Activated B cell treated with CpG ODN at 0.5 μM for 24 hours (primary cell): ENCODE measurements at regions of chr20 and their contacts with region 1.

Region 1: DNA sequence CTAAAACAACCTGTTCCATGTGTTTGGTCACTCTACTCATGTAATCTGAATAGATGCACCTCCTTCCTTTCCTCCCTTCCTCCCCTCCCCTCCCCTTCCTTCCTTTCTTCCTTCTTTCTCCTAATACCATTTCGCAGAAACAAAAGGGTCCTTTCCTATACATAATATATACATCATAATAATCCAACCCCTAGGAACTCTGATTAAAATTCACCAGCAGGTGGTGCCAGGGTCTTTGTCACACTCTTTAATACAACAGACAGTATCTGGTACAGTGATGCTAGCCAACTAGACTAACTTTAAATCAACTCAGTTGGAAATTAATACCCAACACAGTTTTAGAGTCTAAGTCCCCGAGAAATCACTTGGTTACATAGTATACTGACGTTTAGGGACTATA is 181.2 kb upstream of the SHLD1 start:
- DNase-seq: no peak
- ATAC-seq: peak; percentile 90
- H3K4me3 Mint-ChIP-seq: no peak overlapping the region
- H3K27ac Mint-ChIP-seq: peak overlapping the region; percentile 43
- H3K4me1 Mint-ChIP-seq: peaks cover 23% of the 10 kb centered on the region
- H3K27me3 Mint-ChIP-seq: no peaks in the 10 kb centered on the region
- CTCF ChIP-seq: peak; percentile 67

Region 2: GRCh38 chr20:5557123-5557522 is 11.9 kb before region 1 on chr20:
- CTCF ChIA-PET with region 1: interaction called, 19 read pairs
- POLR2A ChIA-PET with region 1: no interaction called
- intact Hi-C with region 1: no loop called
- DNase-seq: no peak
- ATAC-seq: peak; percentile 66
- H3K4me3 Mint-ChIP-seq: no peak overlapping the region
- H3K27ac Mint-ChIP-seq: no peak overlapping the region
- H3K4me1 Mint-ChIP-seq: peaks cover 2% of the 10 kb centered on the region
- H3K27me3 Mint-ChIP-seq: no peaks in the 10 kb centered on the region
- CTCF ChIP-seq: no peak

Region 3: DNA sequence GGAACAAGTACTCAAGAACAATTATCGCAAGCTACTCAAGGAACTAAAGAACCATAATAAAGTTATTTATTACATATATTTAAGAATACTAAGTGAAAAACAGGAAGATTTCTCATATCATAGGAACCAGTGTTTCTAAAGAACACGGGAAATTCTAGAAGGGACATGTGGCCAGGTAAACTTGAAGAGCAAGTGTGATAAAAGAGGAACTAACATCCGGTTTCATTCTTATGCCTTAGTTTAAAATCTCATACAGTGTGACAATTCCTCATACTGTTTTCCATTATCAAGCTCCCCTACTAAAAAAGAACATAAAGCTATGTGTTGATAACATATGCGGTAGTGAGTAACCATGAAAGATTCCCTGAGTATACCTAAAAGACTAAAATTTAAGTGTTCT is 17.7 kb after region 1 on chr20:
- CTCF ChIA-PET with region 1: interaction called, 5 read pairs
- POLR2A ChIA-PET with region 1: interaction called, 5 read pairs
- intact Hi-C with region 1: loop called (anchors 2 kb)
- DNase-seq: no peak
- ATAC-seq: peak; percentile 69
- H3K4me3 Mint-ChIP-seq: peak overlapping the region; percentile 20
- H3K27ac Mint-ChIP-seq: peak overlapping the region; percentile 67
- H3K4me1 Mint-ChIP-seq: peaks cover 48% of the 10 kb centered on the region
- H3K27me3 Mint-ChIP-seq: no peaks in the 10 kb centered on the region
- CTCF ChIP-seq: no peak

Region 4: GRCh38 chr20:5657190-5657875 is 88.3 kb after region 1 on chr20:
- CTCF ChIA-PET with region 1: no interaction called
- POLR2A ChIA-PET with region 1: no interaction called
- intact Hi-C with region 1: no loop called
- DNase-seq: no peak
- ATAC-seq: no peak
- H3K4me3 Mint-ChIP-seq: no peak overlapping the region
- H3K27ac Mint-ChIP-seq: peak overlapping the region; percentile 68
- H3K4me1 Mint-ChIP-seq: peaks cover 66% of the 10 kb centered on the region
- H3K27me3 Mint-ChIP-seq: no peaks in the 10 kb centered on the region
- CTCF ChIP-seq: no peak

Region 5: DNA sequence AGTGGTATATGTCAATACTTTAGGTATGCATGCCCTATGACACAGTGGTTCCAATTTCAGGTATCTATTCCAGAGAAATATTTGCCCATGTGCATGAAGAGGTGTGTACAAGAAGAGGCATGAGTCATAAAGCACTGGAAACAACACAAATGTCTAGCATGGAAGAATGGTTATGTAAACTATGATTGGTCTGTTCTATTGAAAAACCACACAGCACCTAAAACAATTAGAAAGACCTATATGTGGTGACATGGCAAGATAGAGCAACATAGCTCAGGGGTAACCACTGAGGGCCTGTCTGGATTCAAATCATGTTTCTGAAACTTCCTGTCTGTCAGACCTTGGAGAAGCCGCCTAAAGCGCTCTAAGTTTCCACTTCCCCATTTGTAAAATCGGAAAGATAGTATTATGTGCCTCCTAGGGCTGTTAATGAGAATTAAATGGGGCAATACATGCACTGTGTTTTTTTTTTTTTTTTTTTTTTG is 105.2 kb after region 1 on chr20:
- CTCF ChIA-PET with region 1: interaction called, 3 read pairs
- POLR2A ChIA-PET with region 1: no interaction called
- intact Hi-C with region 1: loop called (anchors 1 kb)
- DNase-seq: no peak
- ATAC-seq: peak; percentile 87
- H3K4me3 Mint-ChIP-seq: peak overlapping the region; percentile 13
- H3K27ac Mint-ChIP-seq: peak overlapping the region; percentile 77
- H3K4me1 Mint-ChIP-seq: peaks cover 30% of the 10 kb centered on the region
- H3K27me3 Mint-ChIP-seq: no peaks in the 10 kb centered on the region
- CTCF ChIP-seq: no peak

Region 6: DNA sequence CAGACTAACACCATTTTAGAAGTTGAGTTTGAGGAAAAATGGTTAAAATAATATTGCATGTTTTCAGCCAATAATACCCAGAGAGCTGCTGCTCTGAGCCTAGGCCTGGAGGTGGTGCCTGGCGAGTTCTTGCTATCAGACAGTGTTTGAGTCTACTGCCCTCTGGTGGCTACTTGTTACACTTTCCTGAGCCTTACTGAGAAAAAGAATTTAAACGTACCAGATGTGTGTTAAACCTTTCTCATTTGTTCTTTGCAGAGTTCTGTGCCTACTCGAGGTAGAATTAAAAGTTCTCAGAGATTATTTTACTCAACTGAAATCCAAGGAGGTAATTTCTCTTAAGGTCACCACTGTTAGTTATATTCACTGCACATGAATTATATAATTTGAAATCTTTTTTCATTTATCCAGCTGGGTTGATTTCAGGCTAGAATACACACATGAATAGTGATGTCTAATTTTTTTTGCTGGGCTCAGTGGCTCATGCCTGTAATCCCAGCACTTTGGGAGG is 219.4 kb after region 1 on chr20:
- CTCF ChIA-PET with region 1: interaction called, 172 read pairs
- POLR2A ChIA-PET with region 1: interaction called, 3 read pairs
- intact Hi-C with region 1: loop called (anchors 1 kb)
- DNase-seq: no peak
- ATAC-seq: peak; percentile 99
- H3K4me3 Mint-ChIP-seq: no peak overlapping the region
- H3K27ac Mint-ChIP-seq: no peak overlapping the region
- H3K4me1 Mint-ChIP-seq: peaks cover 15% of the 10 kb centered on the region
- H3K27me3 Mint-ChIP-seq: no peaks in the 10 kb centered on the region
- CTCF ChIP-seq: no peak

Region 7: GRCh38 chr20:6008254-6008653 is 439.2 kb after region 1 on chr20:
- CTCF ChIA-PET with region 1: no interaction called
- POLR2A ChIA-PET with region 1: no interaction called
- intact Hi-C with region 1: loop called (anchors 1 kb)
- DNase-seq: no peak
- ATAC-seq: no peak
- H3K4me3 Mint-ChIP-seq: no peak overlapping the region
- H3K27ac Mint-ChIP-seq: no peak overlapping the region
- H3K4me1 Mint-ChIP-seq: peaks cover 24% of the 10 kb centered on the region
- H3K27me3 Mint-ChIP-seq: no peaks in the 10 kb centered on the region
- CTCF ChIP-seq: no peak